CD8-positive, alpha-beta T cell (primary cell): ENCODE measurements at regions of chr6 and their contacts with region 1.

Region 1: DNA sequence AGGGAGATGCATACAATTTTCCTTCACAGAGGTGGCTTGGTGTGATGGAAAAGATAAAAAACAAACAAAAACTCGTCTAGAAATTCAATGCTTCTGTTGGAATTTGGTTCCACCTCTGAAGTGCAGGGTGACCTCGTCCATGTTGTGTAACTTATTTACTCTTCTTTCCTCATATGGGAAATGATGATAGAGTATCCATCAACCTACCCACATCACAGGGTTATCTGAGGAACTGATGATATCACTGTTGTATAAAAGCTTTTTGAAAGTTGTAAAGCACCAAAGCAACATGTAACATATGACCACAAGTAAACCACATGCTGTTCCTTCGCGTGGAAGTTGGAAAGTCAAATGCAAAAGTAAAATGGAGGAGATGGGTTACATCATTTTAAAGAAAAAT is 212.0 kb upstream of the SGK1 start:
- DNase-seq: peak in 3 of 9 experiments; percentile 36 to 74 (median 51)
- ATAC-seq: peak; percentile 82
- H3K4me3 ChIP-seq: no peak overlapping the region
- H3K4me3 Mint-ChIP-seq: no peak overlapping the region
- H3K27ac ChIP-seq: no peak overlapping the region
- H3K27ac Mint-ChIP-seq: peak overlapping the region; percentile 52
- H3K4me1 ChIP-seq: peaks cover 26% of the 10 kb centered on the region
- H3K4me1 Mint-ChIP-seq: peaks cover 37% of the 10 kb centered on the region
- H3K27me3 ChIP-seq: no peaks in the 10 kb centered on the region
- H3K27me3 Mint-ChIP-seq: no peaks in the 10 kb centered on the region
- CTCF ChIP-seq: no peak

Region 2: DNA sequence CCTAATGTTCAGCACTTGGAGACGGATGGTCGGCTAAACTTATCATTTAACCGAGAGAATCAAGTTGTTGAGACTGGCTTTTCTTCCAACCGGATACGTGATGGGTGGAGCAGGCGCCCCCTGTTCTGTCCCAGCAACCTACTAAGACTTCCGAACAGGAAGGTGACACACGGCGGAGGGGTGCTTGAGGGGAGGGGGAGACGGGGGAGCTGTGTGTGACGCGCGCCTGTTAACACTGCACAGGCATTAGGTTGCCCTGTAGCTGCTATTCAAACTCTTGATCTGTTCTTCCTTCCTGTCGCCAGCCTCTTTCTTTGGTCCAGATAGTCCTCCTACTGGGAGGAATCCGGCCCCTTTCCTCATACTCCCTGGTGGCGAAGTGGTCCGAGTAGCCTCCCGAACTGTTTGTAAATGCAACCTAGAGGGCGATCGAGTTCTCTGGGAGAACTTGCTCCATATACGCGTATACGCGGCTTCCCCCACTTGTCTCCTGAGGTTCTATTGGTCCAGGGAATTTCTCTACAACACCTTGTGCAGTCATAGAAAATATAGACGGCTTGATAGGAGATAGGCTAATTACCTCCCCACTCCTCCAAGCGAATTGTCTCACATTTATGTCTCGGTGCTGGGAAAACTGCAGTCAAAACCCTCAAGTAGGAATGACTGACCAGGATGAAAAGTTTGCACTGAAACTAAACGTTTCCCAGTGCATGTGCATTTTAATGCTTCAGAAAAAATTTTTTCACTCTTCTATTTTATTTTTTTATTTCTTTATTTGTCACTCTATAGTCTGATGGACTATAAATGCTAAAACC is 351.5 kb before region 1 on chr6:
- CTCF ChIA-PET with region 1: no interaction called
- POLR2A ChIA-PET with region 1: no interaction called
- intact Hi-C with region 1: no loop called
- DNase-seq: peak; percentile 60 to 92 (median 82)
- ATAC-seq: peak; percentile 79
- H3K4me3 ChIP-seq: peak overlapping the region; percentile 48 to 67
- H3K4me3 Mint-ChIP-seq: peak overlapping the region; percentile 98
- H3K27ac ChIP-seq: peak overlapping the region; percentile 64 to 77
- H3K27ac Mint-ChIP-seq: peak overlapping the region; percentile 97
- H3K4me1 ChIP-seq: peaks cover 29% of the 10 kb centered on the region
- H3K4me1 Mint-ChIP-seq: peaks cover 34% of the 10 kb centered on the region
- H3K27me3 ChIP-seq: peaks cover 0 to 3% of the 10 kb centered on the region in 2 experiments
- H3K27me3 Mint-ChIP-seq: no peaks in the 10 kb centered on the region
- CTCF ChIP-seq: no peak

Region 3: GRCh38 chr6:134235937-134236751 is 293.8 kb before region 1 on chr6:
- CTCF ChIA-PET with region 1: no interaction called
- POLR2A ChIA-PET with region 1: no interaction called
- intact Hi-C with region 1: loop called in 1 of 2 experiments (anchors 5 kb)
- DNase-seq: peak in 2 of 9 experiments; percentile 50 to 69
- ATAC-seq: peak; percentile 38
- H3K4me3 ChIP-seq: no peak overlapping the region
- H3K4me3 Mint-ChIP-seq: no peak overlapping the region
- H3K27ac ChIP-seq: no peak overlapping the region
- H3K27ac Mint-ChIP-seq: no peak overlapping the region
- H3K4me1 ChIP-seq: peaks cover 24% of the 10 kb centered on the region
- H3K4me1 Mint-ChIP-seq: peaks cover 33% of the 10 kb centered on the region
- H3K27me3 ChIP-seq: no peaks in the 10 kb centered on the region
- H3K27me3 Mint-ChIP-seq: no peaks in the 10 kb centered on the region
- CTCF ChIP-seq: no peak

Region 4: DNA sequence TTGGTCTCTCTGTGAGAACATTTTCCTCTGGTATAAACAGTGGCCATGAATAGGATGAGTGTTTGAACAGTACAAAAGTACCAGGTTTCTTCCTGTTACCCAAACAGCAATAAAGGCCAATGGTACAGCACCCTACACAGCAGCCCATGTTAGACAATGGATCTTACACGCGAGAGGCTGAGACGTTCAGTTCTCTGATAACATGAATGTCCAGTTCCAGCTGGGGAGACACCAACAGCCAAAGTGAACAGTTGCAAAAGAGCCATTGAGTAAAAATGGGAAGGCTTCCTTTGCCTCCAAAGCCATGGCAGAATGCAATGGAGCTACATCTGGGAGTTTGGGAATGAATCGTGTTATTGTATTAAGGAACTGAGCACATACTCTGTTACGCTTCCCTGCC is 34.8 kb after region 1 on chr6:
- CTCF ChIA-PET with region 1: no interaction called
- POLR2A ChIA-PET with region 1: no interaction called
- intact Hi-C with region 1: loop called in 1 of 2 experiments (anchors 5 kb)
- DNase-seq: no peak
- ATAC-seq: no peak
- H3K4me3 ChIP-seq: no peak overlapping the region
- H3K4me3 Mint-ChIP-seq: no peak overlapping the region
- H3K27ac ChIP-seq: no peak overlapping the region
- H3K27ac Mint-ChIP-seq: no peak overlapping the region
- H3K4me1 ChIP-seq: peaks cover 2% of the 10 kb centered on the region
- H3K4me1 Mint-ChIP-seq: peaks cover 8% of the 10 kb centered on the region
- H3K27me3 ChIP-seq: no peaks in the 10 kb centered on the region
- H3K27me3 Mint-ChIP-seq: no peaks in the 10 kb centered on the region
- CTCF ChIP-seq: no peak

Region 5: DNA sequence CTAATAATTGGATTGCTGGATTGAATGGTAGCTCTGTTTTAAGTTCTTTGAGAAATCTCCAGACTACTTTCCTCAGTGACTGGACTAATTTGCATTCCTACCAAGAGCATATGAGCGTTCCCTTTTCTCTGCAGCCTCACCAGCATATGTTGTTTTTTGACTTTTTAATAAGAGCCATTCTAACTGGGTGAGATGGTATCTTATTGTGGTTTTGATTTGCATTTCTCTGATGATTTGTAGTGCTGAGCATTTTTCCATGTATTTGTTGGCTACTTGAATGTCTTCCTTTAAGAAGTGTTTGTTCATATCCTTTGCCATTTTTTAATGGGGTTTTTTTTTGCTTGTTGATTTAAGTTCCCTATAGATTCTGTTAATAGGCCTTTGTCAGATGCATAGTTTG is 1062.4 kb after region 1 on chr6:
- CTCF ChIA-PET with region 1: no interaction called
- POLR2A ChIA-PET with region 1: no interaction called
- intact Hi-C with region 1: no loop called
- DNase-seq: no peak
- ATAC-seq: no peak
- H3K4me3 ChIP-seq: no peak overlapping the region
- H3K4me3 Mint-ChIP-seq: no peak overlapping the region
- H3K27ac ChIP-seq: no peak overlapping the region
- H3K27ac Mint-ChIP-seq: no peak overlapping the region
- H3K4me1 ChIP-seq: no peaks in the 10 kb centered on the region
- H3K4me1 Mint-ChIP-seq: no peaks in the 10 kb centered on the region
- H3K27me3 ChIP-seq: no peaks in the 10 kb centered on the region
- H3K27me3 Mint-ChIP-seq: no peaks in the 10 kb centered on the region
- CTCF ChIP-seq: no peak